Adrenal gland (tissue), 19 donors: ENCODE measurements at regions of chr7 and their contacts with region 1.

Region 1: GRCh38 chr7:139124084-139124914 is 14.8 kb upstream of the ZC3HAV1 start:
- DNase-seq: no peak
- H3K4me3 ChIP-seq: no peak overlapping the region
- H3K27ac ChIP-seq: no peak overlapping the region
- H3K4me1 ChIP-seq: no peaks in the 10 kb centered on the region
- H3K27me3 ChIP-seq: no peaks in the 10 kb centered on the region
- CTCF ChIP-seq: no peak
- POLR2A ChIP-seq: no peak

Region 2: GRCh38 chr7:139035586-139036353 is 88.5 kb before region 1 on chr7 and contains the start of gene ZC3HAV1L:
- intact Hi-C with region 1: no loop called
- DNase-seq: peak; percentile 56 to 70 (median 63)
- H3K4me3 ChIP-seq: peak within 1 kb of the TSS; percentile 36 to 98 (median 83)
- H3K27ac ChIP-seq: peak within 1 kb of the TSS in 4 of 5 donors; percentile 36 to 85 (median 62)
- H3K4me1 ChIP-seq: peaks cover 5 to 15% of the 10 kb centered on the region in 2 donors
- H3K27me3 ChIP-seq: no peaks in the 10 kb centered on the region
- CTCF ChIP-seq: no peak
- POLR2A ChIP-seq: peak in 1 of 2 donors; percentile 45
- total RNA-seq, gene ZC3HAV1L: 7.4 to 27.2 (median 14.5) TPM

Region 3: DNA sequence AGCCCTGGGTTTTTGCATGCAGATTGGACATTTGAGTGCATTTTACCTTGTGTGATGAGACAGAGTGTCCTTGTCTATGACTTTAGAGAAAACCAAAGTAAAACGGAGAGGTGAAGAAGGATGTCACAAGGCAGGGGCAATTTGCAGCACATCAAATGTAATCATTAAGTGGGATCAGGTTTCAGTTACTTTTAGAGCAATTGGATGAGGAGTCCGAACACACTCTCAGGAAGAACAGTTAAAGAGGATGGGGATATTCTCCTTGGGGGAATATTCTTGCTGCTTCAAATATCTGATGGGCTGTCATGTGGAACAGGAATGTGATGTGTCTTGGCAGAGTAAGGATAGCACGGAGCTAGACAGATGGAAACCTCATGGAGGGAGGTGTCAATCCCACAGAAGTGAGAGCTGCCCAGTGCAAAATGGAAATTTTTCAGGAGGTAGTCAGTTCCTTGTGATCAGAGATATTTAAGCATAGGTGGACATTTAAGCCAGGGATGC is 1280.3 kb after region 1 on chr7:
- intact Hi-C with region 1: loop called in 1 of 2 experiments (anchors 5 kb)
- DNase-seq: no peak
- H3K4me3 ChIP-seq: no peak overlapping the region
- H3K27ac ChIP-seq: no peak overlapping the region
- H3K4me1 ChIP-seq: peaks cover 0 to 3% of the 10 kb centered on the region in 2 donors
- H3K27me3 ChIP-seq: no peaks in the 10 kb centered on the region
- CTCF ChIP-seq: no peak
- POLR2A ChIP-seq: no peak